Caco-2 (cell line): ENCODE measurements at regions of chr16 and their contacts with region 1.

Region 1: GRCh38 chr16:30335598-30336474 is 19.3 kb downstream of the CD2BP2 start:
- DNase-seq: peak in 1 of 2 experiments; percentile 48
- H3K4me3 ChIP-seq: peak overlapping the region; percentile 46
- H3K4me3 Mint-ChIP-seq: peak overlapping the region; percentile 93
- H3K27ac Mint-ChIP-seq: peak overlapping the region; percentile 94
- H3K4me1 ChIP-seq: no peaks in the 10 kb centered on the region
- H3K4me1 Mint-ChIP-seq: peaks cover 8% of the 10 kb centered on the region
- H3K27me3 ChIP-seq: no peaks in the 10 kb centered on the region
- H3K27me3 Mint-ChIP-seq: no peaks in the 10 kb centered on the region
- CTCF ChIP-seq: peak in 1 of 2 experiments; percentile 26

Region 2: DNA sequence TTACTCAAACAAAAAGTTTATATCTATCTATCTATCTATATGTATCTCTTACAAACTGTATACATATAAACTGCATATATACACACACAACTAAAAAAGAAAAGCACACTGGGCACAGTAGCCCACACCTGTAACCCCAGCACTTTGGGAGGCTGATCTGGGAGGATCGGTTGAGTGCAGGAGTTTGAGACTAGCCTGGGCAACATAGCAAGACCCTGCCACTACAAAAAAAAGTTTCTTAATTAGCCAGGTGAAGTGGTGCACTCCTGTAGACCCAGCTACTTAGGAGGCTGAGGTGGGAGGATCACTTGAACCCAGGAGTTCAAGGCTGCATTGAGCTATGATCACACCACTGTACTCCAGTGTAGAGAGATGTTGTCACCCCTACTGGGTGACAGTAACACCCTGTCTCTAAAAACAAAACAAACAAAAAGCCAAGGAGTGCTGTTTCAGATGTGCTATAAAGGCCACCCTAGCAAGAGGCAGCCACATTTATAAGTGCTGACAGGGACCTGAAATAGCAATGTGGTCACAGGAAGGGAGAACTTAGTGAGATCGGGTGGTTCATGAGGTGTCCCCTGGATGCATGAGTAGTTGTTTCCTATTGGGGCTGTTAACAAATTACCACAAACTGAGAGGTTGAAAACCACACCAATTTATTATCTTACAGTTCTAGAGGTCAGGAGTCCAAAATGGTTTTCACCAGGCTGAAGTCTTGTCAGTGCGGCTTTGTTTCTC is 14.5 kb after region 1 on chr16:
- CTCF ChIA-PET with region 1: interaction called, 4 read pairs
- POLR2A ChIA-PET with region 1: interaction called, 10 read pairs
- intact Hi-C with region 1: loop called (anchors 2 kb)
- DNase-seq: no peak
- H3K4me3 ChIP-seq: no peak overlapping the region
- H3K4me3 Mint-ChIP-seq: no peak overlapping the region
- H3K27ac Mint-ChIP-seq: no peak overlapping the region
- H3K4me1 ChIP-seq: no peaks in the 10 kb centered on the region
- H3K4me1 Mint-ChIP-seq: no peaks in the 10 kb centered on the region
- H3K27me3 ChIP-seq: no peaks in the 10 kb centered on the region
- H3K27me3 Mint-ChIP-seq: no peaks in the 10 kb centered on the region
- CTCF ChIP-seq: no peak

Region 3: DNA sequence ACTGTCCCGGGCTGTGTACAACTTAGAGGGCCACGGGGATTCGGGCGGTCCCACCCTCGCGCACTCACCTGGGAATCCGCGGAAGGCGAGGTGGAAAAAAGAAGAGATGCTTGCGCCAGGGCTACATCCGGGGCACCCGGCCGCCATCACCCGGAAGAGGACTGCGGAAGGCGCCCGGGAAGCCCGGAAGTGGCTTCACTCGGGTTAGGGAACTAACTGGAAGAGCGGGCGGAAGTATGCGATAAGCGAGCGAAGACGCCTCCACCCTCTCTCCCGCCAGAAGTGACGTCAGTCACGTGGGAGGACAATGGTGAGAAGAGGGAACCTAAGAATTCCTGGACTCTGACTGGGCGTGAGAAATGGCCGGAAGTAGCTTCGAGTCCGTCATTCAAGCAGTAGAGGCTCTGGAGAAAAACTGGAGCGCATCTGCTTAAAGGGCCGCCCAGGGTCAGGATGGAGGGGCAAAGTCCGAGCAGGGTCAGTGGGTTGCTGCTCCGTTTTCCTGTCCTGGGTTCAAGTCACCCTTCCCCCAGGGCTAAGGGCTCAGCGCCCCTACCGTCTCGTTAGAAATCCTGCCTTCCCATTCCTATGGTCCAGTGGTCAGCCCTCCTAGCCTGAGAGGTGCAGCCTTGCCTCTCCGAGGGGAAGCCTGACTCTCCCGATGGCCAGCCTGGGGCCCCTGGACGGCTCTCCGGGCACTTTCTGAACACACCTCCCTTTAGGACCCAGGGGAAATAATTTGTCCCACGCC is 19.5 kb after region 1 on chr16 and contains the start of gene CD2BP2:
- CTCF ChIA-PET with region 1: interaction called, 4 read pairs
- POLR2A ChIA-PET with region 1: no interaction called
- intact Hi-C with region 1: loop called (anchors 2 kb)
- DNase-seq: peak; percentile 93 to 97
- H3K4me3 ChIP-seq: peak within 1 kb of the TSS; percentile 97
- H3K4me3 Mint-ChIP-seq: peak within 1 kb of the TSS; percentile 94
- H3K27ac Mint-ChIP-seq: peak within 1 kb of the TSS; percentile 99
- H3K4me1 ChIP-seq: peaks cover 5% of the 10 kb centered on the region; the same call in 1 of the 2 replicates
- H3K4me1 Mint-ChIP-seq: peaks cover 18% of the 10 kb centered on the region
- H3K27me3 ChIP-seq: no peaks in the 10 kb centered on the region
- H3K27me3 Mint-ChIP-seq: no peaks in the 10 kb centered on the region
- CTCF ChIP-seq: no peak
- total RNA-seq, gene CD2BP2: 50.1 and 51.8 TPM in 2 replicates

Region 4: DNA sequence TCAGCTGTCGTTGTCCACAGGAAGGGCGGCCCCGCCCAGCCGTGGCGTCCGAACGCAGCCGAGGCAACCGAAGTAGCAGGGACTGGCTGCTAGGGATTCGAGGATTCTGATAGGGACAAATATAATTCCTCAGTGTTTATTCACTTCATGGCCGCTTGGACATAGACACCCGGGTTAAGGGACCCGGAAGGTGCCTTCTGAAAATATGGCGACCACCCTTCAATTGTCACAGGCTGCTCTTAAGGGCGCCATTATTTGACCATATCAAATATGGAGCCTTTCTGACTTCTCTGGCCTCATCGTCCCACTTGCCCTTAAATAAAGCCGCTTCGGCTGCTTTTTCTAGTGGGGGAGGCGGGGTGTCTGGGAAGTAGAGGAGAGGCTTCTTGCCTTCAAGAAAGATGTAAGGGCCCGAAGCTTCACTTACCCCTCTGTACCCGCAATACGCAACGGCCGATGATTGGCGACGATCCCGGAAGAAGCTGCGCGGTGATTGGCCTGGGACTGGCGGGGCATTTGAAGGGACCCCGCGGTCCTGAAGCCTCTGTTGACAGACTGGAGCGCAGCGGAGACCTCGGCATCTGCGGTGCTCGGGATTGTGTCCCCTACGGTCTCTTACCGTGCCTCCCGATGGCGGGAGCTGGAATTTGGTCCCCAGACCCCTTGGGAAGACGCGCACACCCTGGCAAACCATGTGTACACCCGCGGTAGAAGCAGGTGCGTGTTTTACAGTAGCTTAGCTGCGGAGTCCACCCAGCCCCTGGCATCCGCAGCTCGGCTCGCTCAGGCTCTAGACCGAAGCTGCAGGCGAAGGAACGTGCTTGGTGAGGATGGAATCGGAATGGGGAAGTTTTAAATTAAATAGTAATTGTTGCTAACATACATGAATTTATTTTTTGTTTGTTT is 236.1 kb after region 1 on chr16 and contains the start of gene ZNF688:
- CTCF ChIA-PET with region 1: no interaction called
- POLR2A ChIA-PET with region 1: no interaction called
- intact Hi-C with region 1: no loop called
- DNase-seq: peak; percentile 94 to 97
- H3K4me3 ChIP-seq: peak within 1 kb of the TSS; percentile 77
- H3K4me3 Mint-ChIP-seq: peak within 1 kb of the TSS; percentile 82
- H3K27ac Mint-ChIP-seq: peak within 1 kb of the TSS; percentile 93
- H3K4me1 ChIP-seq: no peaks in the 10 kb centered on the region
- H3K4me1 Mint-ChIP-seq: peaks cover 7% of the 10 kb centered on the region
- H3K27me3 ChIP-seq: no peaks in the 10 kb centered on the region
- H3K27me3 Mint-ChIP-seq: no peaks in the 10 kb centered on the region
- CTCF ChIP-seq: no peak
- total RNA-seq, gene ZNF688: 6.2 and 10.0 TPM in 2 replicates

Region 5: GRCh38 chr16:30609926-30610839 is 274.3 kb after region 1 on chr16 and contains the start of gene ZNF689:
- CTCF ChIA-PET with region 1: no interaction called
- POLR2A ChIA-PET with region 1: no interaction called
- intact Hi-C with region 1: no loop called
- DNase-seq: peak; percentile 95
- H3K4me3 ChIP-seq: peak within 1 kb of the TSS; percentile 77
- H3K4me3 Mint-ChIP-seq: peak within 1 kb of the TSS; percentile 79
- H3K27ac Mint-ChIP-seq: peak within 1 kb of the TSS; percentile 89
- H3K4me1 ChIP-seq: no peaks in the 10 kb centered on the region
- H3K4me1 Mint-ChIP-seq: no peaks in the 10 kb centered on the region
- H3K27me3 ChIP-seq: no peaks in the 10 kb centered on the region
- H3K27me3 Mint-ChIP-seq: no peaks in the 10 kb centered on the region
- CTCF ChIP-seq: no peak
- total RNA-seq, gene ZNF689: 11.4 and 11.7 TPM in 2 replicates